CD4-positive, alpha-beta T cell (primary cell): ENCODE measurements at regions of chr16 and their contacts with region 1.

Region 1: GRCh38 chr16:75566040-75566810 is at the start of gene GABARAPL2:
- DNase-seq: peak; percentile 83 to 95 (median 88)
- ATAC-seq: peak; percentile 75
- H3K4me3 ChIP-seq: peak within 1 kb of the TSS; percentile 90
- H3K4me3 Mint-ChIP-seq: peak within 1 kb of the TSS; percentile 94
- H3K27ac ChIP-seq: peak within 1 kb of the TSS; percentile 69 to 76
- H3K27ac Mint-ChIP-seq: peak within 1 kb of the TSS; percentile 89
- H3K4me1 ChIP-seq: peaks cover 41% of the 10 kb centered on the region
- H3K4me1 Mint-ChIP-seq: peaks cover 39% of the 10 kb centered on the region
- H3K27me3 ChIP-seq: no peaks in the 10 kb centered on the region
- H3K27me3 Mint-ChIP-seq: peaks cover 14% of the 10 kb centered on the region
- CTCF ChIP-seq: no peak
- total RNA-seq, gene GABARAPL2: 44.6 to 48.3 TPM

Region 2: GRCh38 chr16:75148311-75149195 is 417.7 kb before region 1 on chr16 and contains the start of gene ZFP1:
- CTCF ChIA-PET with region 1: no interaction called
- POLR2A ChIA-PET with region 1: no interaction called
- intact Hi-C with region 1: loop called in 1 of 2 experiments (anchors 10 kb)
- DNase-seq: peak; percentile 91 to 96 (median 93)
- ATAC-seq: peak; percentile 91
- H3K4me3 ChIP-seq: peak within 1 kb of the TSS; percentile 82
- H3K4me3 Mint-ChIP-seq: peak within 1 kb of the TSS; percentile 94
- H3K27ac ChIP-seq: peak within 1 kb of the TSS; percentile 80 to 88
- H3K27ac Mint-ChIP-seq: peak within 1 kb of the TSS; percentile 88
- H3K4me1 ChIP-seq: peaks cover 9% of the 10 kb centered on the region
- H3K4me1 Mint-ChIP-seq: peaks cover 22% of the 10 kb centered on the region
- H3K27me3 ChIP-seq: no peaks in the 10 kb centered on the region
- H3K27me3 Mint-ChIP-seq: no peaks in the 10 kb centered on the region
- CTCF ChIP-seq: no peak
- total RNA-seq, gene ZFP1: 6.2 to 7.5 TPM

Region 3: GRCh38 chr16:75175074-75175473 is 391.2 kb before region 1 on chr16:
- CTCF ChIA-PET with region 1: no interaction called
- POLR2A ChIA-PET with region 1: no interaction called
- intact Hi-C with region 1: no loop called
- DNase-seq: no peak
- ATAC-seq: no peak
- H3K4me3 ChIP-seq: no peak overlapping the region
- H3K4me3 Mint-ChIP-seq: no peak overlapping the region
- H3K27ac ChIP-seq: no peak overlapping the region
- H3K27ac Mint-ChIP-seq: no peak overlapping the region
- H3K4me1 ChIP-seq: no peaks in the 10 kb centered on the region
- H3K4me1 Mint-ChIP-seq: no peaks in the 10 kb centered on the region
- H3K27me3 ChIP-seq: no peaks in the 10 kb centered on the region
- H3K27me3 Mint-ChIP-seq: no peaks in the 10 kb centered on the region
- CTCF ChIP-seq: no peak

Region 4: DNA sequence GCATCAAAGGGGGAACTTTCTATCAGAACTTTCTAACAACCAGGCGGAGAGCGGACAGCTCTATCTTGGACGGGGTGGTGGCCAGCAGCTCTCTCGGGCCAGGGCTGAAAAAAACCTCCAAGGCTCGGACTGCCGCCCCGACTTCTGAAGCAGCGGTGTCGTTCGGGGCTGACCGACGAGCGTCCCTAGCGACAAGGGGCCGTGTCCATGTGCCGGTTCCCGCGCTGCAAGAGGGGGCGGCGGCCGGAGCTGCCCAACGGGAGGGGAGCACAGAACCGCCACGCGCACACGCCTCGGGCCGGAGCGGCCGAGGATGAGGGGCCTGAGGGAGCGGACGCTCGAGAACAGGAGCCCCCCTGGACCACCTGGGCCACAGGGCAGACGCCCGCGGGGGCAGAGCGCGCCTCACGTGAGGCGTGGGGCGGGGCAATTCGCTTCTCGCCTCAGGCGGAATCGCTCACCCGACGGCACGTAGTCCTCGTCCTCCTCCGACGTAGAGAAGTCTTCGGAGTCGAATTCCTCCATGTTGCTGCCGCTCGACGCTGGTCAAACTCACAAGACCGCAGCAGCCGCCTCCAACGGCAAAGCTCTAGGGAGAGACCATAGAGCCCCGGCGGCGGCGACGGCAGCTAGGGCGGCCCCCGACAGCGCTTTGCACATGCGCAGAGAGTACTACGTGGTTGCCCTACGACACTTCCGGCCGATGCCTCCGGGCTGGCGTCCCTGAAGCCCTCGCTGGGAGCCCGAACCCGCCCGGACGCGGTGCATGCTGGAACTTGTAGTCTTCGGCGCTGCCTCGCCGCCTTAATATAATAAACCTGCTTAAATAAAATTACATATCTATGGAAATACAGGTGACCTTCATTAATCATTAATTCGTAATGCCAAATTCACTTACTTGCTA is 133.1 kb before region 1 on chr16 and contains the start of gene CFDP1:
- CTCF ChIA-PET with region 1: no interaction called
- POLR2A ChIA-PET with region 1: interaction called, 7 read pairs
- intact Hi-C with region 1: loop called in 1 of 2 experiments (anchors 5 kb)
- DNase-seq: peak; percentile 92 to 98 (median 94)
- ATAC-seq: peak; percentile 79
- H3K4me3 ChIP-seq: peak within 1 kb of the TSS; percentile 83
- H3K4me3 Mint-ChIP-seq: peak within 1 kb of the TSS; percentile 94
- H3K27ac ChIP-seq: peak within 1 kb of the TSS; percentile 96 to 97
- H3K27ac Mint-ChIP-seq: peak within 1 kb of the TSS; percentile 96
- H3K4me1 ChIP-seq: peaks cover 33% of the 10 kb centered on the region
- H3K4me1 Mint-ChIP-seq: peaks cover 28% of the 10 kb centered on the region
- H3K27me3 ChIP-seq: no peaks in the 10 kb centered on the region
- H3K27me3 Mint-ChIP-seq: no peaks in the 10 kb centered on the region
- CTCF ChIP-seq: no peak
- total RNA-seq, gene CFDP1: 23.0 to 25.5 TPM

Region 5: DNA sequence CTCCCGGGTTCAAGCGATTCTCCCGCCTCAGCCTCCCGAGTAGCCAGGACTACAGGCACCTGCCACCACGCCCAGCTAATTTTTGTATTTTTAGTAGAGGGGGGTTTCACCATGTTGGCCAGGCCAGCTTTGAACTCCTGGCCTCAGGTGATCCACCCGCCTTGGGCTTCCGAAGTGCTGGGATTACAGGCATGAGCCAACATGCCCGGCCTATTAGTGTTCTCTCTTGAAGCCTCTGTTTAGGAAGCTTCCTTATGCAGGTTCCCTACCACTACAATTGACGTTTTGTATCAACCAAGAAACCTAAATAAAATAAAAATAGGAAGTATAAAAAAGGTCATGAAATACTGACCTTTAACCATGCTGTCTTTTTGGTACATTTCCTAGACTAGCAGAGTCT is 46.3 kb before region 1 on chr16:
- CTCF ChIA-PET with region 1: interaction called, 26 read pairs
- POLR2A ChIA-PET with region 1: interaction called, 16 read pairs
- intact Hi-C with region 1: loop called in 1 of 2 experiments (anchors 2 kb)
- DNase-seq: no peak
- ATAC-seq: no peak
- H3K4me3 ChIP-seq: no peak overlapping the region
- H3K4me3 Mint-ChIP-seq: no peak overlapping the region
- H3K27ac ChIP-seq: no peak overlapping the region
- H3K27ac Mint-ChIP-seq: no peak overlapping the region
- H3K4me1 ChIP-seq: peaks cover 12% of the 10 kb centered on the region
- H3K4me1 Mint-ChIP-seq: peaks cover 14% of the 10 kb centered on the region
- H3K27me3 ChIP-seq: no peaks in the 10 kb centered on the region
- H3K27me3 Mint-ChIP-seq: no peaks in the 10 kb centered on the region
- CTCF ChIP-seq: no peak

Region 6: GRCh38 chr16:75555707-75556430 is 10.4 kb before region 1 on chr16 and contains the start of gene TMEM231:
- CTCF ChIA-PET with region 1: interaction called, 17 read pairs
- POLR2A ChIA-PET with region 1: interaction called, 21 read pairs
- intact Hi-C with region 1: loop called (anchors 1 kb)
- DNase-seq: peak; percentile 95 to 99 (median 97)
- ATAC-seq: peak; percentile 97
- H3K4me3 ChIP-seq: peak within 1 kb of the TSS; percentile 74
- H3K4me3 Mint-ChIP-seq: peak within 1 kb of the TSS; percentile 88
- H3K27ac ChIP-seq: peak within 1 kb of the TSS; percentile 58 to 82
- H3K27ac Mint-ChIP-seq: peak within 1 kb of the TSS; percentile 65
- H3K4me1 ChIP-seq: peaks cover 18% of the 10 kb centered on the region
- H3K4me1 Mint-ChIP-seq: peaks cover 13% of the 10 kb centered on the region
- H3K27me3 ChIP-seq: peaks cover 0 to 3% of the 10 kb centered on the region in 2 experiments
- H3K27me3 Mint-ChIP-seq: peaks cover 8% of the 10 kb centered on the region
- CTCF ChIP-seq: no peak
- total RNA-seq, gene TMEM231: 2.5 TPM

Region 7: DNA sequence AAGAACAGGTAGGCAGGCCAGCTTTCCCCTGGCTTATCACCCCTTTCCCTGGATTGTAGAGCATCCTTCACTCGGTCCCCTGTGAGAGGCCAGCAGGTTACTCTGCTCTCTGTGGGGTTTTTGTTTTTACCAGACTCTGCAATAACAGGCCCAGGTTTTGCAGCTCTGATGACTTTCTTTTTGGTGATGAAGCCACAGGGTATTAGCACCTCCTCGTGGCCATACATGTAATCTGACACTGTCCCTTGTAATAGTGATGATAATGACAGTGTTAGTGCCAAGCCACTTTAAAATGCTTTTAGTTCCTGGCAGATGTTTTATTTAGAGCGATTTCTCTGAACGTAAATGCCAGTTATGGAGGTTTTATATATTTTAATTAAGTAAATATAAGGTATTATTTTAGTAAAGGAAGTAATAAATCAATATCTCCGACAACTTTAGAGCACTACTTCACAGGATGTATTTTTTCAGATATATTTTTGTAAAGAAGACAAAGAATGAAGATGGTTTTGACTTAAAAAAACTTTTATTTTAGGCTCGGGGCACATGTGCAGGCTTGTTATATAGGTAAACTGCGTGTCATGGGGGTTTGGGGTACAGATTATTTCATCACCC is 198.0 kb after region 1 on chr16:
- CTCF ChIA-PET with region 1: interaction called, 4 read pairs
- POLR2A ChIA-PET with region 1: no interaction called
- intact Hi-C with region 1: loop called in 1 of 2 experiments (anchors 5 kb)
- DNase-seq: peak; percentile 31 to 84 (median 44)
- ATAC-seq: peak; percentile 97
- H3K4me3 ChIP-seq: no peak overlapping the region
- H3K4me3 Mint-ChIP-seq: no peak overlapping the region
- H3K27ac ChIP-seq: no peak overlapping the region
- H3K27ac Mint-ChIP-seq: no peak overlapping the region
- H3K4me1 ChIP-seq: peaks cover 6% of the 10 kb centered on the region
- H3K4me1 Mint-ChIP-seq: no peaks in the 10 kb centered on the region
- H3K27me3 ChIP-seq: peaks cover 0 to 3% of the 10 kb centered on the region in 2 experiments
- H3K27me3 Mint-ChIP-seq: no peaks in the 10 kb centered on the region
- CTCF ChIP-seq: peak; percentile 82